A673 (cell line): ENCODE measurements at regions of chrX and their contacts with region 1.

Region 1: GRCh38 chrX:149286940-149287349 is 218.2 kb downstream of the IDS start:
- DNase-seq: peak; percentile 57
- H3K4me3 ChIP-seq: no peak overlapping the region
- H3K27ac ChIP-seq: no peak overlapping the region
- H3K4me1 ChIP-seq: no peaks in the 10 kb centered on the region
- H3K27me3 ChIP-seq: peaks cover 4% of the 10 kb centered on the region
- CTCF ChIP-seq: peak; percentile 80

Region 2: DNA sequence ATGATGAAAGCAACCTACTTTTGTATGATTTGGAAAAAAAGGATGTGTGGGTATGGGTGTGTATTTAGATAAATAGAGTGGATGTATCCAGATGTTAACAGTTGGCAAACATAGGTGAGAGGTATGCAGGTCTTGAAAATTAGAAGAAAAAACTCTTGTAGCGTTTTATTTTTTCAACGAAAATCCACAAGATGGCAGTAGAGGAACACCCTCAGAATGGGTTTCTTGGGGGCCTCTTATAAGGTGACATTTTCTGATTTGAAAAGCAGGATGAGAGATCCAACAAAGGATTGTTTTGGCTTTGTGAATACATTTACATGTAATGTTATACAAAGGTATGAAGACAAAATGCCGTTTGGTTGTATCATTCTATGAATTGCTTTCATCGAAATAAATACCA is 1237.5 kb before region 1 on chrX:
- CTCF ChIA-PET with region 1: no interaction called
- POLR2A ChIA-PET with region 1: no interaction called
- intact Hi-C with region 1: loop called (anchors 2 kb)
- DNase-seq: peak; percentile 60
- H3K4me3 ChIP-seq: no peak overlapping the region
- H3K27ac ChIP-seq: no peak overlapping the region
- H3K4me1 ChIP-seq: no peaks in the 10 kb centered on the region
- H3K27me3 ChIP-seq: no peaks in the 10 kb centered on the region
- CTCF ChIP-seq: peak; percentile 66

Region 3: DNA sequence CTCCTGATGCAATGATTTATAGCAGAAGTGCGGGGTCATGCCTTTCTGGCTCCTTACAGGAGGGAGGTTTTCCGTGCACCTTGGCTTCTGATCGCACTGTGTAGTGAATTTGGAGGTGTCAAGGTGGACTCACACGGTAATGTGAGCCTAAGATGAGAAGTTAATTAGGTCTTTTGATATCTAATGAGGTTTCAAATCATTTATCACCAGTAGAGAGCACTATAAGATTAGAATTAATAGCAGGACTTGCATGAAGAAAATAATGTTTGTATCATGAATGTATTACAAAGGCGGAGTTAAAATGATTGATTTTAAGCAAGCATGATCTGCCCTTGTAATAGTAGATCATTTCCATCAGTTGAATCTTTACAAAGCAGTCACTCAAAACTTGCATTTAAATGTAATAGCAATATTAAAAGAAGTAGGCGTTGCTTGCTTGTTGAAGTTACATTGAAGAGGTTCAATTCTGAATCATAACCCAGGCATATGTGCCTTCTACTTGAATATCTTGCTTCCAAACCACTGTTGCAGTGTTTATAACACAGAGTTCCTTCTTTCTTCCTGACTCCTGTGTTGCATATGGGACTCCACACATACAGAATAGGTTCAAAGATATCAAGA is 1153.7 kb before region 1 on chrX:
- CTCF ChIA-PET with region 1: no interaction called
- POLR2A ChIA-PET with region 1: no interaction called
- intact Hi-C with region 1: loop called (anchors 10 kb)
- DNase-seq: no peak
- H3K4me3 ChIP-seq: no peak overlapping the region
- H3K27ac ChIP-seq: no peak overlapping the region
- H3K4me1 ChIP-seq: no peaks in the 10 kb centered on the region
- H3K27me3 ChIP-seq: no peaks in the 10 kb centered on the region
- CTCF ChIP-seq: peak; percentile 22; the same call in 1 of the 2 replicates